Common myeloid progenitor, CD34-positive (primary cell): ENCODE measurements at regions of chr16 and their contacts with region 1.

Region 1: GRCh38 chr16:22195695-22196558 is 10.2 kb upstream of the EEF2K start:
- DNase-seq: peak; percentile 89 to 94 (median 90)
- H3K4me3 ChIP-seq: peak overlapping the region; percentile 44 to 95 (median 77)
- H3K27ac ChIP-seq: peak overlapping the region in 1 of 2 experiments; percentile 63
- H3K4me1 ChIP-seq: peaks cover 11 to 37% (median 28%) of the 10 kb centered on the region in 4 experiments
- H3K27me3 ChIP-seq: no peaks in the 10 kb centered on the region

Region 2: DNA sequence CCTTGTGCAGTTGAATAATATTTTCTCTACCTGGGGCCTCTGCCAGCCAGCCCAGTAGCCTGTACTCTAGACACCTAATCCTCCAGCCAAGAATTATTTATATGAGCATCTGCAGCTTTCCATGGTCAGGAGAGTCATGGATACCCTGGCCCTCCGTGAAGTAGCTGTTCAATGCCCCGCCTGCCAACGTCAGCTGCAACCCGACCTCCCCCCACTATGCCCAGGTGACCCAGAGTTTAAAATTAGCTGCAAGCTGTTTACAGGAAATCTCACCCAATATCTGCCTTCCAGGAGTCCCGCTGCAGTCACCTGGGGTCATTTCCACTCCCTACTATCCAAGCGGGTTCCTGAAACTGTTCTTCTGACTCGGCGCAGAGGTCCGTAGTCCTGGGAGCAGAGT is 21.3 kb before region 1 on chr16:
- CTCF ChIA-PET with region 1: no interaction called
- POLR2A ChIA-PET with region 1: no interaction called
- DNase-seq: no peak
- H3K4me3 ChIP-seq: no peak overlapping the region
- H3K27ac ChIP-seq: no peak overlapping the region
- H3K4me1 ChIP-seq: no peaks in the 10 kb centered on the region
- H3K27me3 ChIP-seq: no peaks in the 10 kb centered on the region

Region 3: GRCh38 chr16:22297114-22297878 is 101.4 kb after region 1 on chr16 and contains the start of gene POLR3E:
- CTCF ChIA-PET with region 1: interaction called, 14 read pairs
- POLR2A ChIA-PET with region 1: interaction called, 5 read pairs
- DNase-seq: peak; percentile 97 to 99 (median 98)
- H3K4me3 ChIP-seq: peak within 1 kb of the TSS; percentile 84 to 99 (median 95)
- H3K27ac ChIP-seq: peak within 1 kb of the TSS; percentile 92 to 97
- H3K4me1 ChIP-seq: peaks cover 0 to 28% (median 17%) of the 10 kb centered on the region in 4 experiments
- H3K27me3 ChIP-seq: no peaks in the 10 kb centered on the region